PC-9 (cell line): ENCODE measurements at regions of chr19 and their contacts with region 1.

Region 1: GRCh38 chr19:40489882-40490230 is 23.1 kb downstream of the SPTBN4 start:
- DNase-seq: no peak
- H3K4me3 ChIP-seq: no peak overlapping the region
- H3K27ac ChIP-seq: no peak overlapping the region
- H3K4me1 ChIP-seq: no peaks in the 10 kb centered on the region
- H3K27me3 ChIP-seq: peaks cover 10% of the 10 kb centered on the region
- CTCF ChIP-seq: no peak

Region 2: DNA sequence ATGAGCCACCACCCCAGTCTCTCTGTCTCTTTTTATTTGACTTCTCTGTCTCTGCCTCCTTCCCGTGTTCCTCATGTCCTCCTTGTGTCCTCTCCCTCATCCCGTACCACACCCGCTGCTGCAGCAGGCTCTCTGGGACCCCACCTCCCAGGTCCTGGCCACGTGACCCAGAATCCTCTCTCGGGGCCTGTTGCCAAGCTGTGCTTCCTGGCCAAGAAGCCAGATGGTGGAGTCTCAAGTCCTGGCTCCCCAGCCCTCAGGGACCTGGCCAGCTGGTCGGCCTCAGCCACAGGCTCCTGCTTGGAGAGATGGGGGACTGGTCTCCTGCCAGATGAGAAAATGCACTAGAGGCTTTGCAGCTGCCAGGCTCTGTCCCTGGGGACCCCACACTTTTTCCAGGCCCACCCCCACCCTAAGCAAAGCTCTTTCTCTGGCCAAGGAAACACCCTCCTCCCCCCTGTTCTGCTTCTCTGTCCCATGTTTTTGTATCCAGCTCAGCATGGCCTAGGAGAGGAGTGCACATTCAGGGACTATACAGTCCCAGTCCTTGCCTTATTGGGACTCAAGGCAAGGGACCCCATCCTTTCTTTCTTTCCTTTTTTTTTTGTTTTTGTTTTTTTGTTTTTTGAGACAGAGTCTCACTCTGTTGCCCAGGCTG is 52.5 kb after region 1 on chr19:
- CTCF ChIA-PET with region 1: no interaction called
- POLR2A ChIA-PET with region 1: no interaction called
- intact Hi-C with region 1: no loop called
- DNase-seq: no peak
- H3K4me3 ChIP-seq: no peak overlapping the region
- H3K27ac ChIP-seq: no peak overlapping the region
- H3K4me1 ChIP-seq: no peaks in the 10 kb centered on the region
- H3K27me3 ChIP-seq: no peaks in the 10 kb centered on the region
- CTCF ChIP-seq: no peak

Region 3: GRCh38 chr19:41288673-41289505 is 799.0 kb after region 1 on chr19:
- CTCF ChIA-PET with region 1: no interaction called
- POLR2A ChIA-PET with region 1: interaction called, 35 read pairs
- intact Hi-C with region 1: no loop called
- DNase-seq: no peak
- H3K4me3 ChIP-seq: no peak overlapping the region
- H3K27ac ChIP-seq: no peak overlapping the region
- H3K4me1 ChIP-seq: no peaks in the 10 kb centered on the region
- H3K27me3 ChIP-seq: no peaks in the 10 kb centered on the region
- CTCF ChIP-seq: no peak